Posterior cingulate gyrus (tissue), 11 donors: ENCODE measurements at regions of chr11 and their contacts with region 1.

Region 1: DNA sequence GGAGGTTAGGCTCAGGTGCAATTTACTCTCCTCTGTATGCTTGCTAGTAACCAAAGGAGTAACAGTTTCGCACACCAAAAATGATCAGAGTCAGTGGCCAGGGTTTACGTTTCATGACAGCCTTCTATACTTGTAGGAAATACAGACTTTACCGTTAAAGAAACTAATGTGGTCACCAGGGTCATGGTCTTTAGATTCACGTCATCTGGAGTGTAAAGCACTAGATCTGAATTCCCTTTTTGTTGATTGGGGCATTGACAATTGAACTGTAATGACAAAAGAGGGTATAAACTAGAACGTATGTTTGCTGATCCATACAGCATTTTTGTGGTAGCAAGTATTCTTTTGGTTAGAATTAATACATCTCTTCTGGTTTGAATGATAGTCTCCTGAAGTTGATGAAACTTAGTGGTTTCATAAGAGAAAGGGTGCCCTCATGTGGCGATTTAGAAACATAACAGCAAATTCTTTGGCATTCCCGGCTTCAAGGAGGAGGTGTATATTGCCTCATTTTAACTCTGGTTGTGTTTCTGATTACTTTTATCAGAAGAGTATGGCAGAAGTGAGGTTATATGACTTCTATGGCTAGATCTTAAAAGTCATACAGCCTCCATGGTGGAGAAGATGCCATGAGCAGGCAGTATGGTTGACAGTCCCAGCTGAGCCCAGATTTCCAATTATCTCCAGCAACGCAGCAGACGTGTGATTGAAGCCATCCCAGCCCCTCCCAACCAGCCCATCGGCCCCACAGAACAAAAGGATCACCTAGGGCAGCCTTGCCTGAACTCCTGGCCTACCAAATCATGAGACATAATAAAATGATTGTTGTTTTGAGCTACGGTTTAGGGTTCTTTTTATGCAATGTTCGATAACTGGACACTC is 35.1 kb downstream of the MMP7 start:
- DNase-seq: peak in 3 of 10 donors; percentile 15 to 46 (median 37)

Region 2: DNA sequence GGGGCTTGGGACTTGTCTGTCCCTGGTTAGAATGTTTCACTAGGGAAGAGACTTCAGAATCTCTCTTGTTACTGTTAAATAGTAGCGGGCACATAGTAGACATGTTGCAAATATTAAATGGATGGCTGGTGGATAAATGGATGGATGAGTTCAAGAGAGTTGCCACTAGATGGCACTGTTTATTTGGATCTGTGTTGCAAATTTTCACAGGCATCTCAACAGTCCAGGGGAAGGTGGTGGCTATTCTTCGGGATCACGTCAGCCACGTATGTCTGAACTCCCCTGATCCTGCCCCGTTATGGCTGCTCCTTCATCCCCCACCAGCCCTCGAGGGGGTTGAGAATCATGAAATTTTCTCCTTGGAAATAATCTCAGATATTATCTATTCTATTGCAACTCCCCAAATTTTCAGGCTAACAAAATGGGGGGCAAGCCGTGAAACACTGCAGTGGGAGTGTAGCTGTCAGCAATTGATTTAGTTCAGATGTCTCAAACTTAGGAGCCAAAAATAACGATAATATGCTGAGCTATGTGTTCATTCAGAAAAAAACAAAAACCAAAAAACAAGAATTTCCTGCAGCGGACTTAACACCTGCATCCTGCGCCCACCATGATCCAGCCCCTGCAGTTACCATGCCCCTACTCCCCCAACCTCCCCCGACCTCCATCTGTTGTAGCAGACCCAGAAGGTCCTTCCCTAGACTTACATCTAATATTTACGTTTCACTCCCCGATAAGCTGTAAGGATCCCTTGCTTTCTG is 207.3 kb before region 1 on chr11:
- intact Hi-C with region 1: loop called (anchors 5 kb)
- DNase-seq: peak in 4 of 10 donors; percentile 18 to 81 (median 29)

Region 3: DNA sequence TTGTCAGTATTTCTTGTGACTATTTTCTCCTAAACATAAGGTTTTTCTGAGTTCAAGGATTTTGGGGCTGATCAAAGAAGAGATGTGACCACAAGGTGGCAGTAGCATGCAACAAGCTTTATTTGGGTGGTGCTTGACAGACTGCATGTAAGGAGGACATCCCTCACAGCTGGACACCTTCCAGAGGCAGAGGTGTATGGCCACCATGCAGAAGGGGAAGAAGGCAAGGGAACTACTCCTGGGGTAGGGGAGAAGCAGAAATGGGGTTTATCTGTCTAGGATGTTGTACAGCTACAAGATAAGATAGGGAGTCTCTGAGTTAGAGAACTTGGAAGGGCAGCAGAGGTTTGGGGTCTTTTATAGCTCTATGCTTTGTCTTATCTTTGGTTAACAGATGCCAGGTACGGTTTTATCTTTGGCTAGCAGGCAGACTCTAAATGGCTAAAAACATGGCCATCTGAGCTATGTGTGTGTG is 153.5 kb before region 1 on chr11:
- intact Hi-C with region 1: loop called (anchors 1 kb)
- DNase-seq: peak in 6 of 10 donors; percentile 45 to 82 (median 67)

Region 4: DNA sequence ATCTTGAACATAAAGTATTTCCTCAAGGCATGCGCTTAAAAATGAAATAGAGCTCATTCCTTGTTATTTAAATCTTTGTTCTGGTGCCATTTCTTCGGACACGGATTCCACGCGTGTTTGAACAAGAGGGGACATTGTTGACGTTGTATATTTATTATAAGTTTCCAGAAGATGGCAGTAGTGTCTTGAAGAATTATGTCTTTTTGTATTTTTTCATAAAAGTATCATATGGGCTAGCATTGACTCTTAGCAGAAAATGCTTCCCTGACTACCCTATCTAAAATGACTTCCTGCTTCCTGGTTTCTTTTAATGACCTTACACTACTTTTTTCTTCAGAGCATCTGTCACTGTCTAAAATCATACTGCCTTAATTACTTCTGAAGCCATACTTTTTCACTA is 128.0 kb before region 1 on chr11:
- intact Hi-C with region 1: loop called (anchors 1 kb)
- DNase-seq: no peak

Region 5: DNA sequence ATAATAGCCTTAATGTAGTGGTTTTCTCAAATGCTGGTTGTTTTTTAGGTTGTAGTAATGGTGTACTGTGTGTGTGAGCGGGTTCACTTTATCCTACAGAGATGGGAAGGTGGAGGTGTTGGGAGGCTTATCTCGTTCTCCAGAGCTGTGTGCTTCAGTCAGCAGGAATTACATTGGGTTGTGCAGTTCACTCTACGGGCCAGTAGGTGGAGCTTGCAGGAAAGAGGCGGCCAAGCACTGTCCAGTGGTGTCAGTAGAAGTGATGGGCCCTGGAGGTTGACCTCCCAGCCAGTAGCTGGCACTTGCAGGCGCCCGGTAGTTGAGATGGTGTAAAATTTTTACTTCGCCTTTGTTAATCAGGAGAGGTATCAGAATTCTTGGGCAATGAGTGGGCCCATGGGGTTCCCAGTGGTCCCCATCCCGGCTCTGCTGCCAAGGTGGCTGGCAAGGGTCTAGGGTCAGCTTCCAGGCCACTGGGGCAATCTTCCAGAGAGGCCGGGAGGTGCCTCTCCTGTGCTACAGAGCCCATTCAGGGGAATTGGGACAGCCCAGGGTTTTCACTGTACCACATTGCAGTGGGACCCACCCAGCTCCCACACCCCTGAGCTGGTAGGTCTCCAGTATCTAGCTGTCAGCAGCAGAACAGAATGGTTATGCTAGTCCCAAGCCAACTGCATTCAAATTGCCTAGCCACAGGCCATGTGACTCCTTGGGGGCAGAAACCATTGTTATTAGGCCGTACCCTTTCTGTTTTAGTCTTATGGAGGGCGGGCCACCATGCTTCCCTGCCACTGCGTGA is 104.5 kb before region 1 on chr11:
- intact Hi-C with region 1: loop called (anchors 1 kb)
- DNase-seq: peak in 9 of 10 donors; percentile 33 to 94 (median 75)

Region 6: GRCh38 chr11:102451681-102452460 is 43.5 kb before region 1 on chr11:
- intact Hi-C with region 1: loop called (anchors 5 kb)
- DNase-seq: peak; percentile 37 to 94 (median 62)

Region 7: DNA sequence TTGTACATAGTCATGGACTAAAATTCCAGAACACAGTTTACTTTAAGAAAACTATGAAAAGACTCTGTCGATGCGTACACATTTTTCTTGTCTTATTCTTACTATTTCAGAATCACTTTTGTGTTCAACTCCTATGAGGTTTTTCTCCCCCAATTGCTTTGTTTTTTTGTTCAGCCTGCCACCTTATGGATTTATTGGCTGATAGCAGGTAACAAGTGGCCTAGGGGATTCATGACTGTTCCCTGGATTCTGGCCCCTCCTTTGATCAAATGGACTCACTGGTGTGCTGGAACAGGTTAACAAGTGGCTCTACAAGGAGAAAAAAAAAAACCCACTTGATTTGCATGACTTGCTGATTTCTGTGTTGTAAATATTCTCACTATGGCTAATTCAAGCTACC is 119.1 kb after region 1 on chr11:
- intact Hi-C with region 1: loop called (anchors 10 kb)
- DNase-seq: no peak

Region 8: GRCh38 chr11:102626676-102627075 is 131.3 kb after region 1 on chr11:
- intact Hi-C with region 1: no loop called
- DNase-seq: no peak